ENCODE measurements at regions of chr17 and their contacts with region 1.

Region 1: DNA sequence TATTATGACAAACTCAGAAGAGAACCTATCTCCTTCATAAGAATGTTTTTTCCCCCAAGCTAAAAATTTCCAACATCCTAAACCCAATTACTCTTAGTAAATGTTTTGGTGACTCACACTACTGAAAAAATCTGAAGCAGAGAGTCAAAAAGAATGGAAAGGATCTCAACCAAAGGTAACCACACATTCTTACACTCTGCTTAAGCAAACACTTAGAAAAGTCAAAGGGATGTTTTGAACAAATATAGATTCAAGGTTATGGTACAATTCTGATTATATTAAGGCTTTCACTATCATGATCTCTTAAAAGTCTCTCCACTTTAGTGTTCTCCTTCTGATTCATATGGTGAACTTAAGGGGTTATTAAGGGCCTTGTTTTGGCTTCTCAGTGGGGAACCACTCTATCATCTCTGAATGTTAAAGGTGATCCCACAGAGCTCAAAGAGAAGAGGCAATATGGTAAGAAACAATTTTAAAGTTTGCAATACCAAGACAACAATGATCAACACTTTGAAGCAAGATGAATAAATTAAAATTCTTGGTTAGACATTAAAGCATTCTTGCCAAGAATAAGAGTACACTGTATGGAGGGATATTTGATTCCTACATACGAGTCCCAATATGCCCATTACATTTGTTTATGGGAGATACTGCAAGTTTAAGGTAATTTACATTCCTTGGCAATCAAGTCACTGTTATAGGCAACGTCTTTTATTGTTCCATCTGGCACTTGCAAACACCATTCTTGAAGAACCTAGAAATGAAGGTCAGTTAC is 69.2 kb downstream of the CDC27 start:
- DNase-seq: peak; percentile 76
- ATAC-seq: peak; percentile 82
- H3K4me3 ChIP-seq: no peak overlapping the region
- H3K27ac ChIP-seq: no peak overlapping the region
- H3K4me1 ChIP-seq: peaks cover 4% of the 10 kb centered on the region
- H3K27me3 ChIP-seq: no peaks in the 10 kb centered on the region
- CTCF ChIP-seq: no peak
- POLR2A ChIP-seq: no peak
- RAD21 ChIP-seq: no peak

Region 2: DNA sequence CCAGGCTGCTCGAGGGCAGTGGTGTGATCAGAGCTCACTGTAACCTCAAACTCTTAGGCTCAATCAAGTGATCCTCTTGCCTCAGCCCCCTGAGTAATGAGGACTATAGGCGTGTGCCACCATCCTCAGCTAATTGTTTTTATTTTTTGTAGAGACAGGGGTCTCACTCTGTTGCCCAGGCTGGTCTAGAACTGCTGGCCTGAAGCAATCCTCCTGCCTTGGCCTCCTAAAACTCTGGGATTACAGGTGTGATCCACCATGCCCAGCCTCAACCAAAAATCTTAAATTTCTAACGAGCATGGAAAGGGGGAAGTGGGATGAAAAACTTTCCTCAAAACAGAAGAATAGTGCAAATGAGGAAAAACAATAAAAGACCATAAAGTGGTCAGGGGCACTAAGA is 23.6 kb before region 1 on chr17:
- CTCF ChIA-PET with region 1: no interaction called
- POLR2A ChIA-PET with region 1: interaction called, 12 read pairs
- dilution Hi-C with region 1: no loop called
- in situ Hi-C with region 1: no loop called
- intact Hi-C with region 1: no loop called
- DNase-seq: no peak
- ATAC-seq: no peak
- H3K4me3 ChIP-seq: no peak overlapping the region
- H3K27ac ChIP-seq: no peak overlapping the region
- H3K4me1 ChIP-seq: peaks cover 2% of the 10 kb centered on the region; the same call in 1 of the 2 replicates
- H3K27me3 ChIP-seq: no peaks in the 10 kb centered on the region
- CTCF ChIP-seq: no peak
- POLR2A ChIP-seq: no peak
- RAD21 ChIP-seq: no peak

Region 3: DNA sequence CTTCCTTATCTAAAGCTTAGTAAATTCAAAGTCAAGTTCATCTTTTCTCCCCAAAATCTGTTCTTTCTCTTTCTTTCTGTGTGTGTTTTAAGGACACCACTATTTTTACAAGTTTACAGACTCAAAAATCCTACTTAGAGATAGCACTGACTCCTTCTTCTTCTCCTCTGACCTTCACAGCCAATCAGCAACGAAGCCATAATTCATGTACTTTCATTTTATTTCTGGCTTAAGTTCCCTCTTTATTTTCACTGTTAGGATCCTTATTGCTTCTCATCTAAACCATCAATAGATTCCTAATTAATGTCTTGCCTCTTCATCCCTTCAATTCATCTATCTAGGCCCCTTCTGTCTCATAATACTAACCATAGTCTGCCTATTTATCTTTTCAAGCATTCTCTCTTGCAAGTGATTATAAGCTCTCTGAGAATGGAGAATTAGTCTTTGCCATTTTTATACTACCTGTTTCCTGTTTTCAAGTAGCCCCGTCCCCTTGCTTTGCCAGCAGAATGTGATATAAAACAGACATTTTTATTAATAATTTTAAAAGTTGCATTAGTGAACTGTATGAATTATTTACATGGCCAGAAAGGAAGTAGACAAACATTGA is 42.2 kb after region 1 on chr17:
- CTCF ChIA-PET with region 1: no interaction called
- POLR2A ChIA-PET with region 1: no interaction called
- dilution Hi-C with region 1: no loop called
- in situ Hi-C with region 1: no loop called
- intact Hi-C with region 1: loop called (anchors 5 kb)
- DNase-seq: no peak
- ATAC-seq: no peak
- H3K4me3 ChIP-seq: no peak overlapping the region
- H3K27ac ChIP-seq: no peak overlapping the region
- H3K4me1 ChIP-seq: no peaks in the 10 kb centered on the region
- H3K27me3 ChIP-seq: no peaks in the 10 kb centered on the region
- CTCF ChIP-seq: no peak
- POLR2A ChIP-seq: no peak
- RAD21 ChIP-seq: no peak